ENCODE measurements at regions of chr7 and their contacts with region 1.

Region 1: DNA sequence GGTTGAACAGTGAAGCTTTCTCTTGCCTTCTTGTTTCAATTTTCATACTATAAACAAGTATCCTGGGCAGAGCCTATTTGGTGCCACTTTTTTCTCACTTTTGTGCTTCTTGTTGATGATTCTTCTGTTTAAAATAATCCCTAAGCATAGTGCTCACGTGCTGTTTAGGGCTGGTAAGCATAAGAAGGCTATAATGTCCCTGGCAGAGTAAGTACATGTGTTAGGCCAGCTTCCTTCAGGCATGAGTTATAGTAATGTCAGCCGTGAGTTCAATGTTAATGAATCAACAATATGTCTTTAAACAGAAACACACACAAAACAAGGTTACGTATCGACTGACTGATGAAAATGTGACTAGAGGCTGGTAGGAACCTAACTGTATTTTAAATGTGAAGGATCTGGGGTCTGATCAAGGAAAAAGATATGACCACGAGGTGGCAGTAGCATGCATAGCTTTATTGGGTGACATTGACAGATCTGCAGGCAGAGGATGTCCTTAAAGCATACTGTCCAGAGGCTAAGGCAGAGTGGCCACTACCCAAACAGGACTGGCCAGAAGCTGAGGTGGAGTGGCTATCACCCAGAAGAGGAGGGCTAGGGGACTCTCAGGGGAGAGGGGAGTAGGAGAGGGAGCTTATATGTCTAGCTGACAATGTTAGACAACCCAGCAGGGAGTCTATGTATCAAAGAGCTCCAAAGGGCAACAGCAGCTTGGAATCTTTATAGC is 113.7 kb downstream of the BRAF start:
- DNase-seq: peak in 2 of 3 donors; percentile 33 to 93
- ATAC-seq: peak; percentile 92
- H3K4me3 ChIP-seq: no peak overlapping the region
- H3K4me1 ChIP-seq: no peaks in the 10 kb centered on the region
- CTCF ChIP-seq: peak; percentile 24

Region 2: DNA sequence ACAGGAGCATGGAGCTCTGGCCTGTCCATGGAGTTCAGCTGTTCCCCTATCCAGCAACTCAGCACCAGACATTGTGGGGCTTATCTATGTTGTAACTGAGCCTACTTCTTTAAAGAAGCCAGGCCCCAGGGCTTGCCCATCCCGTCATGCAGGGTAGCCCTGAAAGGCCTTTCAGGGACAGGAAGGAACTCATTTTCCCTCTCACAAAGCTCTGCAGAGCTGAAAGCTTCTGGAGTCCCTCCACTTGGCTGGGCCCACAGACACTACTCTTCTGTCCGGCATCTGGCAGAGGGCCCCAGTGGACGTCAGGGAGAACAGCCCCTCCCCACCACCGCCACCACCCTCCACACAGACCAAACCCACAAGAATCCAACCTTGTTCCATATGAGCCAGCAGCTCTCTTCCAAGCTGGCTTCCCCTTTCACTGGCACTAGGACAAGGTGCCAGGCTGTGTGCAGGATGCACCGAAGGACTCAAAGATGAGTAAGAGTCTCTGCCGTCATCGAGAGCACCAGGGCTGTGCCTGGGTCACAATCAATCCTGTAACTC is 203.5 kb before region 1 on chr7:
- intact Hi-C with region 1: no loop called
- DNase-seq: peak; percentile 44 to 66 (median 47)
- ATAC-seq: peak; percentile 43
- H3K4me3 ChIP-seq: no peak overlapping the region
- H3K4me1 ChIP-seq: no peaks in the 10 kb centered on the region
- CTCF ChIP-seq: no peak

Region 3: GRCh38 chr7:140696680-140697446 is 114.1 kb before region 1 on chr7 and contains the start of gene NDUFB2:
- intact Hi-C with region 1: no loop called
- DNase-seq: peak; percentile 83 to 84 (median 84)
- ATAC-seq: peak; percentile 95
- H3K4me3 ChIP-seq: peak within 1 kb of the TSS; percentile 68
- H3K4me1 ChIP-seq: peaks cover 20% of the 10 kb centered on the region
- CTCF ChIP-seq: no peak
- total RNA-seq, gene NDUFB2: 209 to 226 (median 210) TPM

Region 4: GRCh38 chr7:141014524-141015395 is 203.8 kb after region 1 on chr7 and contains the start of gene MRPS33:
- intact Hi-C with region 1: loop called (anchors 5 kb)
- DNase-seq: peak; percentile 94 to 97 (median 96)
- ATAC-seq: peak; percentile 99
- H3K4me3 ChIP-seq: peak within 1 kb of the TSS; percentile 50
- H3K4me1 ChIP-seq: peaks cover 16% of the 10 kb centered on the region
- CTCF ChIP-seq: peak; percentile 22
- total RNA-seq, gene MRPS33: 68.8 to 102 (median 80.1) TPM